ENCODE measurements at regions of chr15 and their contacts with region 1.

Region 1: GRCh38 chr15:92521624-92522008 is 127.9 kb downstream of the ST8SIA2 start:
- DNase-seq: peak; percentile 66
- ATAC-seq: peak; percentile 96

Region 2: GRCh38 chr15:92499731-92500530 is 21.7 kb before region 1 on chr15:
- intact Hi-C with region 1: no loop called
- DNase-seq: no peak
- ATAC-seq: no peak

Region 3: DNA sequence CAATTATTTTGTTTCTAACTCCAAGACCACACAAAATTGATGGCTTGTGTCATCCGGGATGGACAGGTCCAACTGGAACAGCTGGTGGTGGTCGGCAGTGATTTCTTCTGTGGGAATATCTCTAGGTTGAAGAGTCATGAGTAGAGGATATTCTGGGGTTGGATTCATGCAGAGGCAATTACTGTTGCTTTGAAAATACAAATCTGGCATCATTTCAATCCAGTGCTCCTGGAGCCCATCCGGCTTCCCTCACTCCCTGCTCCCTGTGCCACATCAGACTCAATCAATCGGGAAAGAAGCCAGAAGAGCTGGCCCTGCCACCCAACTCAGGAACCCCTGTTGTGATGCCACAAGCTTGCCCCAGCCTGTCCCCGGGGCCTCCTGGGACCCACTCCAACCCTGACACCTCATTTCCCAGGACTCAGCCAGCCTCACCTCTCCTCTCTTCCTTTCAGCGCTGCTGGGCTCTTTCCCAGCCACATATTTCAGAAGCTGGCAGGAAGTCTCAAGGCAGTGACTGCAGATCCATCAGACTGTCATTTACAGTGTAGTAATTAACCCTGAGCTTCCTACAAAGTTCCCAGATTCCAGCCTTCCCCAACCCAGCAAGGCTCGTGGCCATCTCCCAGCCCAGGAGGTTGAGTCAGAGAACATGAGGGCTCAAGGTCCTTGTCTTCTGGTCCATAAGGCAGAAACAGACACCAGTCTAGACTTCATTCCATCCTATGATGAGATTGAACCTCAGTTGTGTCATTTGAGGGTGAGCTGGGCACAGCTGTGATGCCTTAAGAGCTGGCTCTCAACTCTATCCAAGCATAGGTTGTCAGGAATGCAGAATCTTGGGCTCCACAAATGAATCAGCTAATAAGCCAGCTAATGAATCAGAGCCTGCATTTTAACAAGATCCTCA is 19.9 kb after region 1 on chr15:
- intact Hi-C with region 1: no loop called
- DNase-seq: peak; percentile 40
- ATAC-seq: peak; percentile 39

Region 4: DNA sequence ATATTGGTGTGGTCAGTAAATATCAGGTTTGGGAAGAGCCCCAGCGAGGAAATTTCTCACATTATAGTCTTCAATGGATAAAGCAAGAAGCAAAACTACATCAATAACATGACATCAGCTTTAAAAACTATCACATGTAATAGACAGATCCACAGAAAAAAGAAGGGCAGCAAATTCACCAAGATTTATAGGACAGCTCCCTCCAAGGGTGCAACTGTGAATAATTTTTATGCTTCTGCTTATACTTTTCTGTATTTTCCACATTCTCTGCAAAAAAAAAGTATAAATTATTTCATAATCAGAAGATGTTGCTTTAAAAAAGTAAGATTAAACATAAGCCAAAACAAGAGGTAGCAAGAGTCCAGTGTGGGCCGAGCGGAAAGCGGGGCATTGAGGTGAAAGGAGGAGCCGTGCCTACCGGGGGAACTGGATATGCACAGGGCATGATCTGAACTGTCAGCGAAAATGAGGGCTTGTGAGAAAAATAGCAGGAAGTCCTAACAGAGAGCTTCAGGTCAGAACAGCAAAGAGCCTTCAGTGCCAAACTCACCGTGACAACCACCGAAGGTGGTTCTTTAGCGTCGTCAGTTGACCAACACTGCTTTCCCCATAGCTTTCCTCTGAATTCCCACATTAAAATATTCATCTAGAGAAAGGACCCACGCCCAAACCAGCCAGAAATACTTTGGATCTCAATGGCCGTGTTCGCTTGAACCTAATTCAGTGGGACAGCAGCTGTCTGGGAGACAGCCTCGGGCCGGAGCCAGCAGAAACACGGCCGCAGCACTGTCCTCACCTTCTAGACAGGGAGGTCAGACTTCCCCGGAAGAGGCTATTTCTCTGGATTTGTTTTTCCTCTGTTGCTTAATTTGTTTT is 74.1 kb after region 1 on chr15:
- intact Hi-C with region 1: loop called (anchors 1 kb)
- DNase-seq: no peak
- ATAC-seq: no peak

Region 5: DNA sequence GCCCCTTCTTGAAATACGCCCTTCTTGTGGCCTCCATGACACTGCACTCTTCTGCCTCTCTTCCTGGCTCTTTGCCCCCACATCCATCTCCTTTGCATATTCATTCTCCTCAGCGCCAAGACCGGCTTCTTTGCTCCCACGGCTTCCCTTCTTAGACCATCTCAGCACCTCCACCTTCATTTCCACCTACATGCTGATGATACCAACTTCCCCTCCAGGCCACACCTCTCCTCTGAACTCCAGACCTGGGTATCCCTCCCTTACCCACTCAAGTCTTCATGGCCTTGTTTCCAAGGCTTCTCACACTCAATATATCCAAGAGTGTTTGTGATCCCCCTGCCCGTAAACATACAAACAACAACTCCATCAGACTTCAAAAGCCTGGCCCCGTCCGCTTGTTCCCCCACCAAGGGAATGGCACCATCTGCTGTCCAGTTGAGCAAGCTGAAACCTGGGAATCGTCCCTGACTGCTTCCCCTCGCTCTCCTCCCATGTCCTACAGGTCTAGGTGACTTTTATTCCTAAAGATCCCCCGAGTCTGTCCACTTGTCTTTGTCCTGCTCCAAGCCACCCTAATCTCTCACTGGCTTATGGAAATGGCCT is 161.7 kb after region 1 on chr15:
- intact Hi-C with region 1: loop called (anchors 1 kb)
- DNase-seq: no peak
- ATAC-seq: no peak

Measured in Right ventricle myocardium inferior (tissue), 1 donor.